CD8-positive, alpha-beta T cell (primary cell): ENCODE measurements at regions of chr12 and their contacts with region 1.

Region 1: DNA sequence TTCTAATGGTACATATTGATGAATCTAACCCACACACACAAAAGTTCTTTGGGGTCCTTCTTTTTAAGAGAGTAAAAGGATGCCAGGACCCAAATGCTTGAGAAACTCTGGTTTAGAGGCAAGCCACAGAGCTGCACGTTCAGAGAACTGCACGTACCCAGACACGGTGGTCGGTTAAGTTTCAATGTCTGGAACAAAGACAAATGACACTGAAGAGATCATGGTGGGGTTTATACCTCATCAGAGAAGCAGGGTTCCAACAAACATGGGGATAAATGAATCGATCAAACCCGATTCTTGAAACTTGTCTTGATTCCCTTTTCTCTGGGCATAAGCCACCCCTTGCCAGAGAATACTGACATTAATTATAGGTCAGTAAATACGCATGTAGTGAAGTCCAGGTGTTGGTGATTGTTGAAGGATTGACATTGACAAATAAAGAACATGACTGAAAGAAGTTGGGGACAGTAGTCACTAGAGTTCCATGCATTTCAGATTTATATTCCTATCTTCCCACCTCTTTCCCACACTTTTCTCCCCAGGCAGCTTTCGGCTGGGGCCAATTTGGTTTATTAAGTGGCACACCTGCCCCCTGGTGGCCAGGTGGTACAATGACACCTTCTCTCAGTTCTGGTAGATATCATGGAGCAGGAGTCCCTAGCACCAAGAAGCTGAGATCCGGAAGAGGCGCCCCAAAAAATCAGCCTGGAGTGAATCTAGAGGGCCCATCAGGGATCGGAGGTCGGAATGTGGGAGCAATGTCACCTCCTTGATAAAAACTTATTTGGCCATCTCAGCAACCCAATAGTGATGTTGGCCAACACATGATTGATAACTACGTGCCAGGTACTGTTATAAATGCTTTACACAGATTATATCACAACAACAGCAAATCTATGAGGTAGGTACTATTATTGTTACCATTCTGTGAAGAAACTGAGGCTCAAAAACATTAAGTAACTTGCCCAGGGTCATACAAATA is 17.8 kb upstream of the HDAC7 start:
- DNase-seq: peak; percentile 28 to 84 (median 70)
- ATAC-seq: peak; percentile 46
- H3K4me3 ChIP-seq: no peak overlapping the region
- H3K4me3 Mint-ChIP-seq: no peak overlapping the region
- H3K27ac ChIP-seq: no peak overlapping the region
- H3K27ac Mint-ChIP-seq: peak overlapping the region; percentile 65
- H3K4me1 ChIP-seq: peaks cover 51% of the 10 kb centered on the region
- H3K4me1 Mint-ChIP-seq: peaks cover 54% of the 10 kb centered on the region
- H3K27me3 ChIP-seq: no peaks in the 10 kb centered on the region
- H3K27me3 Mint-ChIP-seq: no peaks in the 10 kb centered on the region
- CTCF ChIP-seq: peak; percentile 86

Region 2: GRCh38 chr12:45898094-45898493 is 1939.4 kb before region 1 on chr12:
- CTCF ChIA-PET with region 1: no interaction called
- POLR2A ChIA-PET with region 1: no interaction called
- intact Hi-C with region 1: no loop called
- DNase-seq: no peak
- ATAC-seq: no peak
- H3K4me3 ChIP-seq: no peak overlapping the region
- H3K4me3 Mint-ChIP-seq: no peak overlapping the region
- H3K27ac ChIP-seq: no peak overlapping the region
- H3K27ac Mint-ChIP-seq: no peak overlapping the region
- H3K4me1 ChIP-seq: peaks cover 6% of the 10 kb centered on the region
- H3K4me1 Mint-ChIP-seq: peaks cover 14% of the 10 kb centered on the region
- H3K27me3 ChIP-seq: no peaks in the 10 kb centered on the region
- H3K27me3 Mint-ChIP-seq: no peaks in the 10 kb centered on the region
- CTCF ChIP-seq: no peak

Region 3: GRCh38 chr12:47236109-47236714 is 601.3 kb before region 1 on chr12:
- CTCF ChIA-PET with region 1: no interaction called
- POLR2A ChIA-PET with region 1: no interaction called
- intact Hi-C with region 1: no loop called
- DNase-seq: no peak
- ATAC-seq: no peak
- H3K4me3 ChIP-seq: no peak overlapping the region
- H3K4me3 Mint-ChIP-seq: no peak overlapping the region
- H3K27ac ChIP-seq: no peak overlapping the region
- H3K27ac Mint-ChIP-seq: peak overlapping the region; percentile 73
- H3K4me1 ChIP-seq: peaks cover 44% of the 10 kb centered on the region
- H3K4me1 Mint-ChIP-seq: peaks cover 61% of the 10 kb centered on the region
- H3K27me3 ChIP-seq: no peaks in the 10 kb centered on the region
- H3K27me3 Mint-ChIP-seq: no peaks in the 10 kb centered on the region
- CTCF ChIP-seq: no peak

Region 4: GRCh38 chr12:47715393-47715876 is 122.0 kb before region 1 on chr12:
- CTCF ChIA-PET with region 1: interaction called, 152 read pairs
- POLR2A ChIA-PET with region 1: no interaction called
- intact Hi-C with region 1: loop called (anchors 1 kb)
- DNase-seq: peak; percentile 56 to 88 (median 85)
- ATAC-seq: peak; percentile 85
- H3K4me3 ChIP-seq: no peak overlapping the region
- H3K4me3 Mint-ChIP-seq: no peak overlapping the region
- H3K27ac ChIP-seq: no peak overlapping the region
- H3K27ac Mint-ChIP-seq: no peak overlapping the region
- H3K4me1 ChIP-seq: peaks cover 17% of the 10 kb centered on the region
- H3K4me1 Mint-ChIP-seq: peaks cover 27% of the 10 kb centered on the region
- H3K27me3 ChIP-seq: no peaks in the 10 kb centered on the region
- H3K27me3 Mint-ChIP-seq: no peaks in the 10 kb centered on the region
- CTCF ChIP-seq: peak; percentile 67

Region 5: GRCh38 chr12:47758834-47759690 is 78.4 kb before region 1 on chr12 and contains the start of gene RAPGEF3:
- CTCF ChIA-PET with region 1: interaction called, 16 read pairs
- POLR2A ChIA-PET with region 1: no interaction called
- intact Hi-C with region 1: no loop called
- DNase-seq: peak in 8 of 9 experiments; percentile 54 to 81 (median 72)
- ATAC-seq: peak; percentile 78
- H3K4me3 ChIP-seq: peak within 1 kb of the TSS; percentile 59 to 61
- H3K4me3 Mint-ChIP-seq: peak within 1 kb of the TSS; percentile 79
- H3K27ac ChIP-seq: no peak within 1 kb of the TSS
- H3K27ac Mint-ChIP-seq: no peak within 1 kb of the TSS
- H3K4me1 ChIP-seq: peaks cover 12% of the 10 kb centered on the region
- H3K4me1 Mint-ChIP-seq: peaks cover 23% of the 10 kb centered on the region
- H3K27me3 ChIP-seq: peaks cover 0 to 6% of the 10 kb centered on the region in 2 experiments
- H3K27me3 Mint-ChIP-seq: no peaks in the 10 kb centered on the region
- CTCF ChIP-seq: peak; percentile 58
- total RNA-seq, gene RAPGEF3: 0.14 to 0.25 TPM

Region 6: GRCh38 chr12:47805417-47805816 is 32.1 kb before region 1 on chr12:
- CTCF ChIA-PET with region 1: interaction called, 728 read pairs
- POLR2A ChIA-PET with region 1: interaction called, 29 read pairs
- intact Hi-C with region 1: loop called in 1 of 2 experiments (anchors 1 kb)
- DNase-seq: no peak
- ATAC-seq: no peak
- H3K4me3 ChIP-seq: no peak overlapping the region
- H3K4me3 Mint-ChIP-seq: peak overlapping the region; percentile 12
- H3K27ac ChIP-seq: no peak overlapping the region
- H3K27ac Mint-ChIP-seq: peak overlapping the region; percentile 95
- H3K4me1 ChIP-seq: peaks cover 96% of the 10 kb centered on the region
- H3K4me1 Mint-ChIP-seq: peaks cover 95% of the 10 kb centered on the region
- H3K27me3 ChIP-seq: no peaks in the 10 kb centered on the region
- H3K27me3 Mint-ChIP-seq: no peaks in the 10 kb centered on the region
- CTCF ChIP-seq: no peak

Region 7: DNA sequence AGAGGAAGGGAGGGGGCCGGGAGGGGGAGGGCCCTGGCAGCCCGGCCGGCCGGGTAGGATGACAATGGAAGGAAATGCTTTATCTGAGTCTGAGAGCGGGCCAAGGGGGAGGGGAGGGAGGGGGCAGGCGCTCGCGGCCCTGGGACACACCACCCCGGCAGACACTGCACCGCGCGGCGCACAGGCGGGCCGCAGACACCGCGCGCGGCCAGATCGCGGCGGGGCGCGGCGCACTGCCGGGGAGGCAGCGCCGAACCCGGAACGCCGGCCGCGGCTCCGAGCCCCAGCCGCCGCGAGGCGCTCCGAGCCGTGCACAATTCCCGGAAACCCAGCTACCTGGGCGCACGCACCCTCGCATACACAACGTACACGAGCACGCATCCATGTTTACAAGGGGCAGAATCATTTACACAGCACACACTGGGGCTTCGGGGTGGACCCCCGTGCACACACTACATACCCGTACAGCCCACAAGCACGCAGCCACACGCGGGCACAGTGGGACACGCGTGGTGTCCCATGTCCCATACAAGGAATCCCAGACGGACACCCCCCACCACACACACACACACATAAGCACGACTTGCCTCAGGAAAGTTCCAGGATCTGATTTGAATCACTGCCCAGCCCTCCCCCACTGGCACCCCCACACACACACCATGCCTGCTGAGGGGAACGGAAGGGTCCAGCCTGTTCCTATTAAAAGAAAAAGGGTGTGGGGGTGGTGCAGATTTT is 17.4 kb before region 1 on chr12 and contains the start of gene HDAC7:
- CTCF ChIA-PET with region 1: interaction called, 728 read pairs
- POLR2A ChIA-PET with region 1: interaction called, 87 read pairs
- intact Hi-C with region 1: loop called (anchors 1 to 2 kb)
- DNase-seq: peak; percentile 39 to 85 (median 73)
- ATAC-seq: peak; percentile 51
- H3K4me3 ChIP-seq: peak within 1 kb of the TSS; percentile 78 to 83
- H3K4me3 Mint-ChIP-seq: peak within 1 kb of the TSS; percentile 95
- H3K27ac ChIP-seq: peak within 1 kb of the TSS; percentile 78 to 81
- H3K27ac Mint-ChIP-seq: peak within 1 kb of the TSS; percentile 96
- H3K4me1 ChIP-seq: peaks cover 80% of the 10 kb centered on the region
- H3K4me1 Mint-ChIP-seq: peaks cover 87% of the 10 kb centered on the region
- H3K27me3 ChIP-seq: no peaks in the 10 kb centered on the region
- H3K27me3 Mint-ChIP-seq: no peaks in the 10 kb centered on the region
- CTCF ChIP-seq: no peak
- total RNA-seq, gene HDAC7: 87.3 to 91.4 TPM